Naive thymus-derived CD4-positive, alpha-beta T cell (primary cell): ENCODE measurements at regions of chr12 and their contacts with region 1.

Region 1: DNA sequence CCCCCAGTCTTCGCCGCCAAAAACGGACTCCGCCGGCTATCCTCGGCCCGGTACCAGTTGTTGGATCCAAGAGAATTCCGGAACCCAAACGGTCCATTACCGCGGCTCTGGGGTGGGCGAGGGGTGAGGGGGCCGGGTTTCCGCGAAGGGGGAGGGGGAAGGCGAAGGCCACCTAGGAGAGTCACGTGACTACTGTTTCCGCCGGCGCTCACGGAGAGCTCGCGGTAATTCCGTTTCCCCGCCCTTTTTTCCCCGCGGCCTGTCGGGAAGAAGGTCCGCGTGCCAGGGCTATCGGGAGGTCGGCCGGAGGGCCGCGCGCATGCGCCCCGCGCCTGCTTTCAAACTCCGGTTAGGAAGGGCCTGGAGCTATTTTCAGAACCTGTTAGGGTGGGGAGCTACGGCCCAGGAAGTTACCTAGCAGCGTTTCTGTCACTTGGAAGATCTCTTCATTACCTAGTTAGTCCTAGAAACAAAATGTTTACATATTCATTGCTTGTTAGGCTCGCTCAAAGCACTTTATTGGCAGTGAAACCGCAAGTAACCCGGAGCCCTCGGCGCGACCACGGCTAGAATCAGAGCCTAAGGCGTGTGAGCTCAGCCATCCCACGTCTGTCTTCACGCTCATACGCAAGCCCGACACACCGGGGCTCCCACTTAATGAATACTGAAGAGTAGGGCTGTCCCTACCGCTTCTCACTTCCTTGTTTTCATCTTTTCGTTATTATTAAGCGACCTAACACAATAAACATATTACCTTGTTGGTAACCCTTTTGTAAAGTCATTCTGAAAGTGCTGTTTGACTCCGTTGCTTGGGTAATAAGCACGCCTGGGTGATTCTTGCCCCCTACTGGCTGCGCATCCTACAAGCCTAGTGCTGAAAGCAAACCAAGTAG is 624 bp upstream of the SBNO1 start:
- DNase-seq: peak; percentile 91 to 99 (median 98)
- ATAC-seq: peak; percentile 85
- H3K4me3 ChIP-seq: peak overlapping the region; percentile 97
- H3K4me3 Mint-ChIP-seq: peak overlapping the region; percentile 89 to 98 (median 95)
- H3K27ac ChIP-seq: peak overlapping the region; percentile 86
- H3K27ac Mint-ChIP-seq: peak overlapping the region; percentile 93 to 99 (median 95)
- H3K4me1 ChIP-seq: peaks cover 14 to 16% of the 10 kb centered on the region in 2 donors
- H3K4me1 Mint-ChIP-seq: peaks cover 11 to 29% (median 16%) of the 10 kb centered on the region in 7 donors
- H3K27me3 ChIP-seq: no peaks in the 10 kb centered on the region
- H3K27me3 Mint-ChIP-seq: no peaks in the 10 kb centered on the region

Region 2: DNA sequence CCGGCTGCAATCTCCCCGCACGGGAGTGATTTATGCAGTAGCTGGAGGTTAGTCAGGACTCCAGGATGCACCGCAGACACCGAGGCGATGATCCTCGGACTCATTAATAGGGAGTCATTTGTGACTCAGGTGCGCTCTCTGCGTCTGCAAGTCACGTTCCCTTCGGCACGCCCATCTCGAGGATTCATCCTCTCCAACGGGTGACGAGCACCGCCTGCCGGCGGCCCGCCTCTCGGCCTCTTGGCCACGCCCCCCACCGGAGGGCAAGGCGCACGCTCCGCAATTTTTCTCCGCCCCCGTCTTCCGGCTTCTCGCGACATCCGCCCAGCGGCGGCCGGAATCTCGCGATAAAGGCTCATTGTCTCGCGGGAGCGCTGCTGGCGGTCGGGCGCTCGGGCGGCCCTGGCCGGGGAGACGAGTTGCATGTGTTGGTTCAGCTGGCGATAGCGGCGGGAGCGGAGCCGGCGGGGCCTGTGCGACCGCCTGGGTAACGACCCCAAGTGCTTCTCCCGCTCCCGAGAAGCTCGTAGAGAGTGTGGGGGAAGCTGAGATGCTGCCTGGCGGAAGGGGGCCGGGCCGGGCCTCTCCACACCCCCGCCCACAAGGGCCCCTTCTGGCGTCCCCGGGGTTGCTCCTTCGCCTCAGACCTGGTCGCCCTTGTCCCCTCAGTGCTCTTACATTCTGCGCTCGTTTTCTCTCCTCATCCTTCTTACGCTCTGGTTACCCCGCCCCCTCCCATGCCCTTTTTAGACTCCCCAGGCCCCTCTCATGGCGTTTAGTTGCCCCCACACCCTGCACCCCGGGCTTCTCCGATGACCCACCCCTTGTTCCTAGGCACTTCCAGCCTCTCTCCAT is 612.6 kb before region 1 on chr12 and contains the start of gene DENR:
- CTCF ChIA-PET with region 1: no interaction called
- POLR2A ChIA-PET with region 1: no interaction called
- intact Hi-C with region 1: loop called (anchors 5 to 10 kb)
- DNase-seq: peak; percentile 98 to 100 (median 99)
- ATAC-seq: peak; percentile 99
- H3K4me3 ChIP-seq: peak within 1 kb of the TSS; percentile 87
- H3K4me3 Mint-ChIP-seq: peak within 1 kb of the TSS; percentile 93 to 100 (median 96)
- H3K27ac ChIP-seq: peak within 1 kb of the TSS; percentile 94
- H3K27ac Mint-ChIP-seq: peak within 1 kb of the TSS; percentile 89 to 98 (median 96)
- H3K4me1 ChIP-seq: peaks cover 12 to 19% of the 10 kb centered on the region in 2 donors
- H3K4me1 Mint-ChIP-seq: peaks cover 31 to 70% (median 60%) of the 10 kb centered on the region in 7 donors
- H3K27me3 ChIP-seq: no peaks in the 10 kb centered on the region
- H3K27me3 Mint-ChIP-seq: no peaks in the 10 kb centered on the region
- total RNA-seq, gene DENR: 29.5 to 65.5 (median 46.1) TPM

Region 3: DNA sequence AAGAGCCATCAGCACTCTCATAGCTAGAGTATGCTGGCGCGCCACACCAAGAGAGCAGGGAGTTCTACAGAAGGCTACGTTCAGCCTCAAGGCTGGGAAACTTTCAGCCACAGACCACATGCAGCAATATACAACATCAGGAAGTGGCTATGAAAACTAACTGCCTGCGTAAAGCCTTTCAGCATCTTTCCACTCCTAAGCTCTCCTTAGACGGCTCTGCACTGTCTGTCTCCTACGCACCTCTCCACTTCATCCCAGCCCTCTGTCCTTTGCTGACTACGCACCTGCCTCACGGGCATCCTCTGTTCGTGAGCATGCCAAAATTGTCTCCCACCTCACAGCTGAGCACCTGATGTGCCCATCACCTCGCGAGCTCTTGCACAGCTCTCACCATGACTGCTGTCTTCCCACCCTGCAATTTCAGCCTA is 142.0 kb before region 1 on chr12:
- CTCF ChIA-PET with region 1: interaction called, 3 read pairs
- POLR2A ChIA-PET with region 1: no interaction called
- intact Hi-C with region 1: loop called in 1 of 2 experiments (anchors 2 kb)
- DNase-seq: peak; percentile 19 to 79 (median 67)
- ATAC-seq: peak; percentile 98
- H3K4me3 ChIP-seq: peak overlapping the region; percentile 49
- H3K4me3 Mint-ChIP-seq: peak overlapping the region; percentile 68 to 93 (median 78)
- H3K27ac ChIP-seq: peak overlapping the region; percentile 57
- H3K27ac Mint-ChIP-seq: peak overlapping the region; percentile 87 to 99 (median 95)
- H3K4me1 ChIP-seq: peaks cover 3 to 15% of the 10 kb centered on the region in 2 donors
- H3K4me1 Mint-ChIP-seq: peaks cover 21 to 46% (median 42%) of the 10 kb centered on the region in 7 donors
- H3K27me3 ChIP-seq: no peaks in the 10 kb centered on the region
- H3K27me3 Mint-ChIP-seq: no peaks in the 10 kb centered on the region

Region 4: DNA sequence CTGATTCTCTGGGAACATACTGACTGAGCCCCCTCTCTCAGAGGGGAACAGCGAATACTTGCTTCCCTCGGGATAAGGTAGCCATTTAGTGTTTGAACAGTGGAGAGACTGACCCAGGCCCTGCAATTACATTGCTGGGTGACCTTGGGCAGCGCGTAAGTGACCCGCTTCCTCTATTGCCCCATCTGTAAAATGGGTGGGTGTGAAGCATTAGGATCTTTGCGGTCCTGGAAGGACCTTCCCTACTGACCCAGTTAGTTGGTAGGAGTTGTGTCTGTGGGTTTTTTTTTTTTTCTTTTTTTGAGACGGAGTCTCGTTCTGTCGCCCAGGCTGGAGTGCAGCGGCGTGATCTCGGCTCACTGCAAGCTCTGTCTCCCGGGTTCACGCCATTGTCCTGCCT is 17.4 kb after region 1 on chr12:
- CTCF ChIA-PET with region 1: interaction called, 5 read pairs
- POLR2A ChIA-PET with region 1: interaction called, 20 read pairs
- intact Hi-C with region 1: loop called (anchors 1 kb)
- DNase-seq: no peak
- ATAC-seq: no peak
- H3K4me3 ChIP-seq: no peak overlapping the region
- H3K4me3 Mint-ChIP-seq: peak overlapping the region in 8 of 10 donors; percentile 31 to 90 (median 52)
- H3K27ac ChIP-seq: no peak overlapping the region
- H3K27ac Mint-ChIP-seq: peak overlapping the region in 2 of 9 donors; percentile 26 to 51
- H3K4me1 ChIP-seq: peaks cover 2 to 6% of the 10 kb centered on the region in 2 donors
- H3K4me1 Mint-ChIP-seq: peaks cover 0 to 21% (median 16%) of the 10 kb centered on the region in 7 donors
- H3K27me3 ChIP-seq: no peaks in the 10 kb centered on the region
- H3K27me3 Mint-ChIP-seq: no peaks in the 10 kb centered on the region

Region 5: GRCh38 chr12:123502163-123502704 is 137.0 kb after region 1 on chr12:
- CTCF ChIA-PET with region 1: no interaction called
- POLR2A ChIA-PET with region 1: no interaction called
- intact Hi-C with region 1: no loop called
- DNase-seq: no peak
- ATAC-seq: no peak
- H3K4me3 ChIP-seq: no peak overlapping the region
- H3K4me3 Mint-ChIP-seq: no peak overlapping the region
- H3K27ac ChIP-seq: no peak overlapping the region
- H3K27ac Mint-ChIP-seq: no peak overlapping the region
- H3K4me1 ChIP-seq: no peaks in the 10 kb centered on the region
- H3K4me1 Mint-ChIP-seq: peaks cover 0 to 5% (median 0%) of the 10 kb centered on the region in 7 donors
- H3K27me3 ChIP-seq: no peaks in the 10 kb centered on the region
- H3K27me3 Mint-ChIP-seq: peaks cover 0 to 2% (median 0%) of the 10 kb centered on the region in 5 donors

Region 6: DNA sequence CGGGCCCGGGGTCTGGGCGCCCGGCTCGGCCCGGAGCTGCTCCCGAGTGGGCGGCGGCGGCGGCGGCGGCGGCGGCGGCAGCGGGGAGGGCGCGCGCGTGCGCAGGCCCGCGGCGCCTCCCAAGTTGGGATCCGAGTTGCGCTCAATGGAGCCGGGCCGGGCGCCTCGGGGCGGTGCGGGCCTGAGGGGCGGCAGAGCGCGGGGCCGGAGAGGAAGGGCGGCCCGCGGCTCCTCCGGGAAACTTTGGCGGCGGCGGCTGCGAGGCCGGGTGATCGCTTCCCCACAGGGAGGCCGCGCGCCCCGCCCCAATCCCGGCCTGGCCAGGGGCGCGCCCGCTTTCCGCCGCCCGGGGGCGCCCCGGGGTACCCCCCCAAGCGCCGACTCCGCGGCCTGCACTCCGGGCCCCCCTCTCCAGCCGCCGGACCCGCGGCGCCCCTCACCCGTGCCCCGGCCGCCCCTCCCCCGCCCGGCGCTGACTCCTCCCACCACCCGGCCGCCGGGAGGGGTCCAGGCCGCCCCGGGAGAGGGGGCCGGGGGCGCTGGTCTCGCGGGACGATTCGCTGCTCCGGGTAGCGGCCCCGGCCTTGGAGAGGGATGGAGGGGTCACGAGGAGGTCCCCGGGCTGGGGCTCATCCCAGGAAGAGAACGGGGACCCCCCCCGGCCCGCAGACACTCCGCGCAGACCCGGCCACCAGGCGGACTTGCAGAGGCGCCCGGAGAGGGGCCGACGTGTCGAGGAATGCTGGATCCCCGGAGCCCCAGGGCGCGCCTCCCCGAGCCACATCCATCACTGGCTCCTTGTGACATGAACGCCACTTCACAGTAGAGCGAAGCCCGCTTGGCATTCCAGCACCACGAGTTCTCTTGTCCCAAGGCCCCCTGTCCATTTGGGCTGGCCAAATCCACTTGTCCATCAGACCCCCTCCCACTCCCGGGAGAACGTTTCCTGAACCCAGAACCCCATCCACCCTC is 168.7 kb after region 1 on chr12 and contains the start of gene RILPL1:
- CTCF ChIA-PET with region 1: interaction called, 5 read pairs
- POLR2A ChIA-PET with region 1: interaction called, 4 read pairs
- intact Hi-C with region 1: loop called in 1 of 2 experiments (anchors 1 kb)
- DNase-seq: peak; percentile 16 to 70 (median 47)
- ATAC-seq: peak; percentile 86
- H3K4me3 ChIP-seq: peak within 1 kb of the TSS; percentile 65
- H3K4me3 Mint-ChIP-seq: peak within 1 kb of the TSS; percentile 83 to 91 (median 88)
- H3K27ac ChIP-seq: peak within 1 kb of the TSS; percentile 61
- H3K27ac Mint-ChIP-seq: peak within 1 kb of the TSS; percentile 60 to 95 (median 79)
- H3K4me1 ChIP-seq: peaks cover 11 to 18% of the 10 kb centered on the region in 2 donors
- H3K4me1 Mint-ChIP-seq: peaks cover 11 to 25% (median 16%) of the 10 kb centered on the region in 7 donors
- H3K27me3 ChIP-seq: no peaks in the 10 kb centered on the region
- H3K27me3 Mint-ChIP-seq: peaks cover 0 to 22% (median 0%) of the 10 kb centered on the region in 5 donors
- total RNA-seq, gene RILPL1: 1.5 to 9.2 (median 3.9) TPM

Region 7: DNA sequence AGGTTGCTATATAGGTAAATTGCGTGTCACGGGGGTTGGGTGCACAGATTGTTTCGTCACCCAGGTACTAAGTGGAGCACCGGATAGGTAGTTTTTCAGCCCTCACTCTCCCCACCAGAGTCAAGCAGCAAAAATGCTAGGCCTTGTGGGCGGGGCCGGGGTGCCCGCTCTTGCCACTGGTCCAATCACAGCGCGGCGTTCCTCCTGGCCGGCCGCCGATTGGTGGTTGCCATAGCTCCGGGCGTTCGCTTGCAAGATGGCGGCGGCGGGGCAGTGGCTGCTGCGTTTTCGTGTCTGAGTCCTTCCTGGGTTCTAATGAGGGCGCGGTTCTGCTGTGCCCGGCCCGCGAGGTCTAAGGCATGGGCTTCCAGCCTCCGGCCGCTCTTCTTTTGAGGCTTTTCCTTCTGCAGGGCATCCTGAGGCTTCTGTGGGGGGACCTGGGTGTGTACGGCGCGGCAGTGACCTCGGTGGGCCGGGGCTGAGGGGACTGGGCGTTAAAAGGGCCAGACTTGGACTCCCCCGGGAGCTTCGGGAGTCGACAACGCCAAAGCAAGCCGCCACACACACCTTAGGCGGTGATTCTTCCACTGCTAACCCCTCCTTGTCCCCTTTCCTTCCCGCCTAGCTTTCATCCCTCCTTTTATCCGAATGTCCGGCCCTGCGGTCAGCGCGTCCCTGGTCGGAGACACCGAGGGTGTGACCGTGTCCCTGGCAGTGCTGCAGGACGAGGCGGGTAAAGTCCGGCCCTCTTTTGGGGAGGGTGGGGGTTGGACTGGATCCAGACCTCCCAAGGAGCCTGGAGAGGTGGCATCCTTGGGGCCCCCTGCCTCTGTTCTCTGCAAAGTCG is 305.8 kb after region 1 on chr12 and contains the start of gene TCTN2:
- CTCF ChIA-PET with region 1: no interaction called
- POLR2A ChIA-PET with region 1: no interaction called
- intact Hi-C with region 1: loop called (anchors 1 kb)
- DNase-seq: peak; percentile 81 to 93 (median 91)
- ATAC-seq: peak; percentile 100
- H3K4me3 ChIP-seq: peak within 1 kb of the TSS; percentile 75
- H3K4me3 Mint-ChIP-seq: peak within 1 kb of the TSS; percentile 75 to 92 (median 86)
- H3K27ac ChIP-seq: peak within 1 kb of the TSS; percentile 69
- H3K27ac Mint-ChIP-seq: peak within 1 kb of the TSS; percentile 31 to 86 (median 68)
- H3K4me1 ChIP-seq: peaks cover 3 to 10% of the 10 kb centered on the region in 2 donors
- H3K4me1 Mint-ChIP-seq: peaks cover 5 to 19% (median 11%) of the 10 kb centered on the region in 7 donors
- H3K27me3 ChIP-seq: no peaks in the 10 kb centered on the region
- H3K27me3 Mint-ChIP-seq: no peaks in the 10 kb centered on the region
- total RNA-seq, gene TCTN2: 2.5 to 9.1 (median 5.3) TPM